CD4-positive, alpha-beta T cell (primary cell): ENCODE measurements at regions of chr10 and their contacts with region 1.

Region 1: GRCh38 chr10:43105102-43105785 is 28.4 kb downstream of the RET start:
- DNase-seq: peak; percentile 49 to 87 (median 67)
- ATAC-seq: peak; percentile 98
- H3K4me3 ChIP-seq: peak overlapping the region; percentile 62
- H3K4me3 Mint-ChIP-seq: peak overlapping the region; percentile 76
- H3K27ac ChIP-seq: no peak overlapping the region
- H3K27ac Mint-ChIP-seq: no peak overlapping the region
- H3K4me1 ChIP-seq: peaks cover 23% of the 10 kb centered on the region
- H3K4me1 Mint-ChIP-seq: peaks cover 4% of the 10 kb centered on the region
- H3K27me3 ChIP-seq: peaks cover 18 to 25% of the 10 kb centered on the region in 2 experiments
- H3K27me3 Mint-ChIP-seq: peaks cover 28% of the 10 kb centered on the region
- CTCF ChIP-seq: peak; percentile 99

Region 2: GRCh38 chr10:42552493-42553407 is 552.5 kb before region 1 on chr10:
- CTCF ChIA-PET with region 1: no interaction called
- POLR2A ChIA-PET with region 1: no interaction called
- intact Hi-C with region 1: loop called in 1 of 2 experiments (anchors 10 kb)
- DNase-seq: peak; percentile 87 to 97 (median 94)
- ATAC-seq: peak; percentile 95
- H3K4me3 ChIP-seq: peak overlapping the region; percentile 85
- H3K4me3 Mint-ChIP-seq: peak overlapping the region; percentile 94
- H3K27ac ChIP-seq: peak overlapping the region; percentile 58 to 75
- H3K27ac Mint-ChIP-seq: peak overlapping the region; percentile 87
- H3K4me1 ChIP-seq: peaks cover 23% of the 10 kb centered on the region
- H3K4me1 Mint-ChIP-seq: peaks cover 46% of the 10 kb centered on the region
- H3K27me3 ChIP-seq: no peaks in the 10 kb centered on the region
- H3K27me3 Mint-ChIP-seq: no peaks in the 10 kb centered on the region
- CTCF ChIP-seq: no peak

Region 3: DNA sequence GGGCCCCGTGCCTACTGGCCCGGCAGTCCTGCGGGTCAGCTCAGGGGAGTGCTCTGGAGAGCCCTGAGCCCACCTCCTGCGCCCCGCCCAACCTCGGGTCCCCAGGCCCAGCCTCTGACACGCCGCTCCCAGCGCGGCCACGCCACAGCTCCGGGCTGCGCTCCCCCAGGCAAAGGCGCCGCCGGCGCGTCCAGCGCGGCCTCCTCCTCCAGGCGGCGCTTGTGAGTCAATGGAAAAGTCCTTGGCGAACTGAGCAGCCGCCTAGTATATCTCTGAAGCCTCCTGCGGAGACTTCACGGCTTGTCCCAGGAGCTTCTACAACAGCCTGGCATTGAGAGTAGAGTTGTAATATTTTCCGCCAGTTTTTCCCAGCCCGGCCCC is 352.1 kb before region 1 on chr10:
- CTCF ChIA-PET with region 1: interaction called, 3 read pairs
- POLR2A ChIA-PET with region 1: no interaction called
- intact Hi-C with region 1: loop called (anchors 1 to 2 kb)
- DNase-seq: peak; percentile 29 to 74 (median 54)
- ATAC-seq: peak; percentile 73
- H3K4me3 ChIP-seq: peak overlapping the region; percentile 56
- H3K4me3 Mint-ChIP-seq: peak overlapping the region; percentile 84
- H3K27ac ChIP-seq: no peak overlapping the region
- H3K27ac Mint-ChIP-seq: no peak overlapping the region
- H3K4me1 ChIP-seq: peaks cover 28% of the 10 kb centered on the region
- H3K4me1 Mint-ChIP-seq: peaks cover 13% of the 10 kb centered on the region
- H3K27me3 ChIP-seq: peaks cover 45 to 74% of the 10 kb centered on the region in 2 experiments
- H3K27me3 Mint-ChIP-seq: peaks cover 82% of the 10 kb centered on the region
- CTCF ChIP-seq: peak; percentile 66

Region 4: DNA sequence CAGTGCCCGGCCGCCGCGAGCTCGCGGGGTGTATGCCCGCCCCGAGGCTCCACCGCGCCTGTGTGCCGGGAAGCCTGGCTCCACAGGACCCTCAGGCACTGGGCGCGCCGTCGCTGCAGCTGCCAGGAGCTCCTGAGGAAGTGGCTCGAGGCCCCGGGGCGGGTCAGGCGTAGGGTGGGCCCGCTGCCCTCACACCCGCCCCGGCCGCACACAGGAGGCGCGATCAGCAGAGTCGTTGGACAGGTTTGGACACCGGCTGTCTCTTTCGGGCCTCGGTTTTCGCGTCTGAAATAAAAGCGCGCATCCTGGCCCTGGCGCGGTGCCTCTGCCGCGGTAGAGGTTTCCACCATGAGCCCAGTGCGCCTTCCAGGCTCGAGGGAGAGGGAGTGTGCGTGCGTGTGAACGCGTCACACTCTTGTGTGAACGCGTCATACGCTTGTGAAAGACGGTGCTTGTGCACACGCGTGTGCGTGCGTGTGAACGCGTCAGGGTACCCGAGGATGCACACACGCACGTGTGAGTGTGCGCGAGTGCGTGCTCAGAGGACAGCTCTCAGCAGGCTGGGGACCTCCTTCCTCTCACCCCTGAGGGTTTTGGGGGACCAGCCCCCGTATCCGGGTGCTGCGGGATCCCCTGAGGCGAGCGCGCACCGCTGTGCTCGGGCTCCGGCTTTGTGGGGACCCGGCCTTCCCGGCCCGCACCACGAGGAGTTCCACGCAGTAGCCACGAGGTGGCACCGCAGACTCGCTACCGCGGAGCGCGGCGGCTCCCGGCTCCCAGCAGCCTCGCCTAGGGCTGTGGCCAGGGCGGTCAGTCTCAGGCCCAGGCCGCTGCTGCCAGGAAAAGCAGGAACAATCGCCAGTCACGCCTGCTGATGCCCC is 238.9 kb before region 1 on chr10:
- CTCF ChIA-PET with region 1: no interaction called
- POLR2A ChIA-PET with region 1: no interaction called
- intact Hi-C with region 1: loop called in 1 of 2 experiments (anchors 1 kb)
- DNase-seq: peak in 12 of 14 experiments; percentile 7 to 74 (median 31)
- ATAC-seq: peak; percentile 46
- H3K4me3 ChIP-seq: peak overlapping the region; percentile 26
- H3K4me3 Mint-ChIP-seq: no peak overlapping the region
- H3K27ac ChIP-seq: no peak overlapping the region
- H3K27ac Mint-ChIP-seq: no peak overlapping the region
- H3K4me1 ChIP-seq: peaks cover 9% of the 10 kb centered on the region
- H3K4me1 Mint-ChIP-seq: peaks cover 5% of the 10 kb centered on the region
- H3K27me3 ChIP-seq: peaks cover 10 to 12% of the 10 kb centered on the region in 2 experiments
- H3K27me3 Mint-ChIP-seq: peaks cover 43% of the 10 kb centered on the region
- CTCF ChIP-seq: peak; percentile 40

Region 5: DNA sequence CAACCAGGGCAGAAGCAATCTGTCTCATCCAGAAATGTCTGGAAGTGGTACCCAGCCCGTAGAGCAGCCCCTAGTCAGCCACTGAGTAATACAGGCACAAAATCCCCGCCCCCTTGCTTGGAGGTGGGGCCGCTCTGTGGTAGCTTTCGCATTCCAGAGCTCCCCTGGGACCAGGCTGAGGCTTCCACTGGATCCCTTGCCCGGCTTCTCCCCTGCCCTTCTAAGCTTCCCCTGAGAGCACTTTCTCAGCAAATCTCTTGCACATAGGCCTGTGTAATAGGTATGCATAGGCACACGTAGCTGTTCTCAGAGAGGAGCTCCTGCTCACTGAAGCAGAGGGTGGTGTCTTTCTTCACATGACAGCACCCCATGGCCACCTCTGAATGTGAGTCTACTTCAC is 178.4 kb before region 1 on chr10:
- CTCF ChIA-PET with region 1: no interaction called
- POLR2A ChIA-PET with region 1: no interaction called
- intact Hi-C with region 1: no loop called
- DNase-seq: no peak
- ATAC-seq: no peak
- H3K4me3 ChIP-seq: no peak overlapping the region
- H3K4me3 Mint-ChIP-seq: no peak overlapping the region
- H3K27ac ChIP-seq: no peak overlapping the region
- H3K27ac Mint-ChIP-seq: no peak overlapping the region
- H3K4me1 ChIP-seq: no peaks in the 10 kb centered on the region
- H3K4me1 Mint-ChIP-seq: no peaks in the 10 kb centered on the region
- H3K27me3 ChIP-seq: peaks cover 11 to 23% of the 10 kb centered on the region in 2 experiments
- H3K27me3 Mint-ChIP-seq: peaks cover 10% of the 10 kb centered on the region
- CTCF ChIP-seq: no peak

Region 6: GRCh38 chr10:43471935-43472720 is 366.9 kb after region 1 on chr10:
- CTCF ChIA-PET with region 1: no interaction called
- POLR2A ChIA-PET with region 1: no interaction called
- intact Hi-C with region 1: no loop called
- DNase-seq: no peak
- ATAC-seq: no peak
- H3K4me3 ChIP-seq: no peak overlapping the region
- H3K4me3 Mint-ChIP-seq: no peak overlapping the region
- H3K27ac ChIP-seq: no peak overlapping the region
- H3K27ac Mint-ChIP-seq: no peak overlapping the region
- H3K4me1 ChIP-seq: no peaks in the 10 kb centered on the region
- H3K4me1 Mint-ChIP-seq: no peaks in the 10 kb centered on the region
- H3K27me3 ChIP-seq: no peaks in the 10 kb centered on the region
- H3K27me3 Mint-ChIP-seq: no peaks in the 10 kb centered on the region
- CTCF ChIP-seq: no peak